Calu3 (cell line): ENCODE measurements at regions of chr5 and their contacts with region 1.

Region 1: DNA sequence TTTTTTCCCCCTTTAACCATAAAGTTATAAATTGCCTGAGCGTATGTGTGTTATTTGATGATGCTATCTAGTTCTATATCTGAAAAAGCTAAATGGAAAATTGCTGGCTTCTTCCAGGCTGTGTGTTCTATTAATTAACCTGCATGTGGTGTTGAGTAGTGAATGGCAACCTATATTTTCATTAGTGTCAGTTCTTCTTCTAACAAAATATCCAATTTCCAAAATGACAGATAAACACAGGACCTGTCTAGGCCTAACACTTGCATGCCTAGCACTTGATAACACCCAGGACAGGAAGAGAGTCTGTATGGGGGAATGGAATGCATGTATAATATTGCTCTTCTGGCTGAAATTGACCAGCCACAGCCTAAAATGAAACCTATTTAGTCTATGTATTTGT is 91.7 kb downstream of the CD180 start:
- DNase-seq: no peak
- H3K4me3 Mint-ChIP-seq: no peak overlapping the region
- H3K27ac Mint-ChIP-seq: no peak overlapping the region
- H3K4me1 Mint-ChIP-seq: no peaks in the 10 kb centered on the region
- H3K27me3 Mint-ChIP-seq: no peaks in the 10 kb centered on the region
- CTCF ChIP-seq: no peak

Region 2: DNA sequence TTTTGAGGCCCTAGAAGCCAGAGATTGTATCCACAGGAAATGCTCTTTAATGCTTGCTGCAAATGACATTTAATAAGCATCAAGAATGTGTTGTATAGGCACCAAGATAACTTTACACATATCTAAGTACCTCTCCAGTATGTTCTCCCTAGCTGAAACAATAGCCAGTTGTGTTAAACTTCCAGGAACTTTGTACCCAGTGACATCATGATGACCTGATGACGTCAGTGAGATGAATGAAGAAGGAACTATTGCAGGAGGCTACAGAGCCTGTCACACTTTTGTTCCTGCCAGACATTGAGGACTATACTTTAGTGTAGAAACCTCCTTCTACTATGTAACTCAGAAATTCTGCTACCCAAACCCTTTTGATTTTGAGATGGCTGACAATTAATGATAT is 38.0 kb before region 1 on chr5:
- CTCF ChIA-PET with region 1: no interaction called
- intact Hi-C with region 1: loop called (anchors 2 kb)
- DNase-seq: peak; percentile 52
- H3K4me3 Mint-ChIP-seq: no peak overlapping the region
- H3K27ac Mint-ChIP-seq: peak overlapping the region; percentile 69
- H3K4me1 Mint-ChIP-seq: peaks cover 16% of the 10 kb centered on the region
- H3K27me3 Mint-ChIP-seq: no peaks in the 10 kb centered on the region
- CTCF ChIP-seq: no peak

Region 3: GRCh38 chr5:67289763-67290521 is 185.1 kb after region 1 on chr5:
- CTCF ChIA-PET with region 1: no interaction called
- intact Hi-C with region 1: no loop called
- DNase-seq: no peak
- H3K4me3 Mint-ChIP-seq: no peak overlapping the region
- H3K27ac Mint-ChIP-seq: no peak overlapping the region
- H3K4me1 Mint-ChIP-seq: no peaks in the 10 kb centered on the region
- H3K27me3 Mint-ChIP-seq: no peaks in the 10 kb centered on the region
- CTCF ChIP-seq: no peak